ENCODE measurements at regions of chr16 and their contacts with region 1.

Region 1: DNA sequence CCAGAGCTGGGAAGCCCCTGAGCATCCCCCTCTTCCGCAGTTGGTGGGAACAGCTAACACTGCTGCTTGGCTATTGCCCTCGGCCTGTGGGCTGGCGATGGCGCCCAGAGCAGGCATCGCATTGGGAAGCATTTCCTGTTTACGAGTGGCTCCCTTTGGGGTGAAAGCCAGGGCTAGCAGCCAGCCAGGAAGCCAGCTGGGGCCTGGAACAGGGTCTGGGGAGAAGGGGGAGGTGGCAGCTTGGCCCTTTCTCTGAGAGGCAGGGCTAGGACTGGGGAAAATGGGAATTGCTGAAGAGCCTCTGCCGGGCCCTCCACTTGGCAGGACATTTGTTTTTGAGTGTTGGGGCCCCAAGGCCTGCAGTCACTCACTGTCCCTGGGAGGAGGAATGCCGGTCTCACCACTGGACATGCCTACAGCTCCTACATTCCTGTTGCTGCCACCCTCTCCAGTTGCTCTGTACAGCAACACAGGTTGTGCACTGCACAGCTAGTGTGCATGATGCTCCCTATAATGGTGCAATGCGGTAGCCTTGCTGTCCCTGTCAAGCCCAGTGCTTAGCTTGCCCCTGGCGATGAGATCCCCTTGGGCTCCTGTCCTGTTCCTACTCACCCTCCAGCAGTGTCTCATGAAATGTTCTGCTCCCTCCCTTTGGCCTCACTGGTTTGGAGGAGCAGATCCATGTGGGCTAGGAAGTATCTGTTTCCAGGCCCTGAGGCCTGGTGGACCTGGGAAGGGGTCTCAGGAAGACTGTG is 2.6 kb upstream of the MTSS2 start:
- DNase-seq: no peak

Region 2: GRCh38 chr16:70257391-70257790 is 431.0 kb before region 1 on chr16:
- intact Hi-C with region 1: no loop called
- DNase-seq: no peak

Region 3: GRCh38 chr16:70638814-70639792 is 49.3 kb before region 1 on chr16:
- intact Hi-C with region 1: no loop called
- DNase-seq: no peak

Region 4: GRCh38 chr16:70725912-70726828 is 37.7 kb after region 1 on chr16:
- intact Hi-C with region 1: loop called (anchors 2 kb)
- DNase-seq: no peak

Region 5: GRCh38 chr16:71297341-71297634 is 608.9 kb after region 1 on chr16:
- intact Hi-C with region 1: no loop called
- DNase-seq: no peak

Measured in cardiac septum (tissue), 1 donor.